ENCODE measurements at regions of chr6 and their contacts with region 1.

Region 1: GRCh38 chr6:43143235-43144124 is 27.6 kb upstream of the SRF start:
- DNase-seq: peak; percentile 83
- H3K4me3 Mint-ChIP-seq: no peak overlapping the region
- H3K27ac Mint-ChIP-seq: no peak overlapping the region
- H3K4me1 Mint-ChIP-seq: peaks cover 16% of the 10 kb centered on the region
- H3K27me3 Mint-ChIP-seq: no peaks in the 10 kb centered on the region

Region 2: DNA sequence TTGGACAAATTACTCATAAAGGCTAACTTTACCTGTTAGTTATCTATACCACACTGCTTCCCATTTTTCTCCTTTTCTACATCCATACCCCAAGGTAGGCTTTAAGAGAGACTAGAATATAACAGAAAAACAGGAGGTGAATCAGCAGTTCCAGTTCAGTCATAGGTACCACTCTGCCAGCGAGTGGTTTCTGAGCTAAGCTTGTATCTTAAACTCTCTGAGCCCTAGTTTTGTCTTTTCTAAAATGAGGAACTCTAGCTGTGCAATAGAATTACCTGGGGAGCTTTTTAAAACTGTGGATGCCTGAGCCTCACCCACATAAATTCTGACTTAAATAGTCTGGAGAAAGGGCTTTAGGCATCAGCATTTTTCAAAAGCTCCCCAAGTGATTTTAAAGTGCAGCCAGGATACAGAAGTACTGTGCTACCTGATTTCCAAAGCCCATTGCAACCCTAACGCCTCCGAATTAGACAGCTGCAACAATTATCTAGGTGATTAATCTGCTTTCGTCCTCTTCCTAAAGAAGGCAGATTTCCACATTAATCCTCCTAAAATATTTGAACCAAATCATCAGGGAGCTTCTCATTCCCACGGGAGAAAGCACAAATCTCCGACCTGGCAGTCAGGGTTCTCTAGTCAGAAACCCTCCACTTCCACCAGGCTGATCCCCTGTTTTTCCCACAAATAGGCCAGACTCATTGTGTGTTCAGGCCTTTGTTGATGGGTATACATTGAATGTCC is 301.5 kb before region 1 on chr6:
- CTCF ChIA-PET with region 1: no interaction called
- intact Hi-C with region 1: no loop called
- DNase-seq: no peak
- H3K4me3 Mint-ChIP-seq: no peak overlapping the region
- H3K27ac Mint-ChIP-seq: no peak overlapping the region
- H3K4me1 Mint-ChIP-seq: peaks cover 13% of the 10 kb centered on the region
- H3K27me3 Mint-ChIP-seq: no peaks in the 10 kb centered on the region

Region 3: DNA sequence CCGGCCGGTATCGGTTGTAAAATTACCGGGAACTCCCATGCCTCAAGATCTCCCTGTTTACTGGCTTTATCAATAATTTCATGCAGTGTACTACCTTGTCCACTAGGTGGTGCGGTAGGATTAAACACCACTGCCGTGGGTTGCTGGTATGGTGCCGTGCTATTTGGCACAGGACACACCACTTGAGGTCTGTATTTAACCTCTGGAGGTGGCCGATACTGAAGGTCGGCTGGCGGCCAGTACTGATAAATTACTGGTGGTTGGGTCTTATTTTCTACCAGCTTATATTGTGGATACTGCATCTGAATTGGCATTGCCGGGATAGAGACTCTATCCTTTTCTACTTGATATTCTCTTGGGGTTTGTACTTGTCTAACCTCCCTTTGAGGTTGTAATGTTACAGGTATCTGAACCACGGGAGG is 241.9 kb before region 1 on chr6:
- CTCF ChIA-PET with region 1: interaction called, 25 read pairs
- intact Hi-C with region 1: loop called (anchors 1 kb)
- DNase-seq: peak; percentile 83
- H3K4me3 Mint-ChIP-seq: no peak overlapping the region
- H3K27ac Mint-ChIP-seq: no peak overlapping the region
- H3K4me1 Mint-ChIP-seq: peaks cover 11% of the 10 kb centered on the region
- H3K27me3 Mint-ChIP-seq: no peaks in the 10 kb centered on the region

Region 4: GRCh38 chr6:42963855-42964605 is 179.4 kb before region 1 on chr6:
- CTCF ChIA-PET with region 1: interaction called, 6 read pairs
- intact Hi-C with region 1: loop called (anchors 1 kb)
- DNase-seq: peak; percentile 72
- H3K4me3 Mint-ChIP-seq: no peak overlapping the region
- H3K27ac Mint-ChIP-seq: no peak overlapping the region
- H3K4me1 Mint-ChIP-seq: peaks cover 20% of the 10 kb centered on the region
- H3K27me3 Mint-ChIP-seq: no peaks in the 10 kb centered on the region

Region 5: GRCh38 chr6:43021270-43022047 is 122.0 kb before region 1 on chr6 and contains the start of gene RRP36:
- CTCF ChIA-PET with region 1: interaction called, 15 read pairs
- intact Hi-C with region 1: no loop called
- DNase-seq: peak; percentile 79
- H3K4me3 Mint-ChIP-seq: peak within 1 kb of the TSS; percentile 96
- H3K27ac Mint-ChIP-seq: peak within 1 kb of the TSS; percentile 89
- H3K4me1 Mint-ChIP-seq: peaks cover 36% of the 10 kb centered on the region
- H3K27me3 Mint-ChIP-seq: no peaks in the 10 kb centered on the region
- total RNA-seq, gene RRP36: 31.0 to 32.7 TPM

Region 6: GRCh38 chr6:43070028-43070632 is 73.3 kb before region 1 on chr6:
- CTCF ChIA-PET with region 1: interaction called, 9 read pairs
- intact Hi-C with region 1: loop called (anchors 1 kb)
- DNase-seq: peak; percentile 37
- H3K4me3 Mint-ChIP-seq: no peak overlapping the region
- H3K27ac Mint-ChIP-seq: no peak overlapping the region
- H3K4me1 Mint-ChIP-seq: no peaks in the 10 kb centered on the region
- H3K27me3 Mint-ChIP-seq: no peaks in the 10 kb centered on the region

Region 7: DNA sequence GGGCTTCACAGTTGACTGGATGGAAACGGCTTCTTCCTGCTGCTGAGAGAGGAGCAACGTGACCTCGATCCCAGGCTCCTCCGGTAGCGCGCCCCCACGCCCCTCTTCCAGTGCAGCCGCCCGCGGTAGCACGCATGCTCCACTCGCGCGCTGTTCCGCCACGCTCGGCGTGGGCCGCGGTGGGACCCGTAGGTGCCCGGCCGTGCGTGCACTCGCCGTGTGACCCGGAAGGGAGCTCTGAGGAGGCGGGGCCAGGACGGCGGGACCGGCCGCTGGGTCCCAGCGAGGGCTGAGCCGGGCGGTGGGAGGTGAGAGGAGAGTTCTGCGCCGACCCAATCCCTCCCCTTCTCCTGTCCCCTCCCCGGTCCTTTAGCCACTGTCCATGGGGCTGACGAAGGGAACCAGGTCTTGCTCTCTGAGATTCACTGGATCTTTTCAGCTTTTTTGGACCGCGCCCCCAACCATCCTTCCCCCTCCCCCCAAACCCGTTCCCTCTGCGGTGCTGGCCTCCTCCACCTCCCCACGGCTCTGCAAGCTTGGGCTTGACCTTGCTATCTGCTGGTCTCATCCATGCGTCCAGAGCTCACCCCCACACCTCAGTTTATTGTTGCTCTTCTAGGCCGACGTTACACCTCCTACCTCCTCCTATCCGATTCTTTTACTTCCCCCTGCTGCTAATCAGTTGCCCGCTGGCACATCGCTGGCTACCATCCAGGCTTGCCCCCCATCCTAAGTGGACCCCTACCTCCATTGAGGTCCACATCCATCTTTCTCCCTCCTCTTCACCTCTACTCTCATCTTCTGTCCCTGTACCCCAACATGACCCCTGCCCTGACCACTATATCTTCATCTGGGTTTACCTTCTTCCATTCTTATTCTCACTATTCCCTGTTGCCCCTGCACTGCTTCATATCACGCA is 38.7 kb after region 1 on chr6 and contains the start of gene CUL9:
- CTCF ChIA-PET with region 1: no interaction called
- intact Hi-C with region 1: no loop called
- DNase-seq: peak; percentile 85
- H3K4me3 Mint-ChIP-seq: peak within 1 kb of the TSS; percentile 95
- H3K27ac Mint-ChIP-seq: peak within 1 kb of the TSS; percentile 84
- H3K4me1 Mint-ChIP-seq: peaks cover 47% of the 10 kb centered on the region
- H3K27me3 Mint-ChIP-seq: no peaks in the 10 kb centered on the region
- total RNA-seq, gene CUL9: 43.1 to 49.3 TPM

Region 8: DNA sequence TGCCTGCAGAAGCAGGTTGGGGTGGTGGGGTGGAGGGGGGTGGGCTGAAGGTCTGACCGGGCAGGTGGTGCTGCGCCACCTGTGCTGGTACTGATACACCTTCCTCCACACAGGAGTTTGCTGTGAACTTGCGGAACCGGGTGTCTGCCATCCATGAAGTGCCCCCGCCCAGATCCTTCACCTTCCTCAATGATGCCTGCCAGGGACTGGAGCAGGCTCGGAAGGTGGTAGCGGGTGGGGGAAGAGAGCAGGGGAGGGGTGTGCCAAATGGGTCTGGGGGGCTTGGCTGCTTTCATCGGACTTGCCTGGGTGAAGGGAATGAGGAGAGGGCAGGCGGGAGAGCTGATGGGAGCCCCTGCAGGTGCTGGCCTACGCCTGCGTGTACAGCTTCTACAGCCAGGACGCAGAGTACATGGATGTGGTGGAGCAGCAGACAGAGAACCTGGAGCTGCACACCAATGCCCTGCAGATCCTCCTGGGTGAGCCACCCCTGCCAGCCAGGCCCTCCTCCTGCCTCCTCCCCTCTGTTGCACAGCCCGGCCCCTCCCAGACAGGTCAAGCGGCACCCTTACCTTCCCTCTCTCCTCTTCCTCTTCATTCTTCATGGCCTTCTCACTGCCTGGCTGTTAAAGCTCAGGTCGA is 79.1 kb after region 1 on chr6:
- CTCF ChIA-PET with region 1: no interaction called
- intact Hi-C with region 1: no loop called
- DNase-seq: no peak
- H3K4me3 Mint-ChIP-seq: no peak overlapping the region
- H3K27ac Mint-ChIP-seq: peak overlapping the region; percentile 98
- H3K4me1 Mint-ChIP-seq: peaks cover 52% of the 10 kb centered on the region
- H3K27me3 Mint-ChIP-seq: no peaks in the 10 kb centered on the region

Measured in activated naive CD4-positive, alpha-beta T cell treated with anti-CD3 and anti-CD28 coated beads for 36 hours (primary cell).